ENCODE measurements at regions of chr1 and their contacts with region 1.

Region 1: DNA sequence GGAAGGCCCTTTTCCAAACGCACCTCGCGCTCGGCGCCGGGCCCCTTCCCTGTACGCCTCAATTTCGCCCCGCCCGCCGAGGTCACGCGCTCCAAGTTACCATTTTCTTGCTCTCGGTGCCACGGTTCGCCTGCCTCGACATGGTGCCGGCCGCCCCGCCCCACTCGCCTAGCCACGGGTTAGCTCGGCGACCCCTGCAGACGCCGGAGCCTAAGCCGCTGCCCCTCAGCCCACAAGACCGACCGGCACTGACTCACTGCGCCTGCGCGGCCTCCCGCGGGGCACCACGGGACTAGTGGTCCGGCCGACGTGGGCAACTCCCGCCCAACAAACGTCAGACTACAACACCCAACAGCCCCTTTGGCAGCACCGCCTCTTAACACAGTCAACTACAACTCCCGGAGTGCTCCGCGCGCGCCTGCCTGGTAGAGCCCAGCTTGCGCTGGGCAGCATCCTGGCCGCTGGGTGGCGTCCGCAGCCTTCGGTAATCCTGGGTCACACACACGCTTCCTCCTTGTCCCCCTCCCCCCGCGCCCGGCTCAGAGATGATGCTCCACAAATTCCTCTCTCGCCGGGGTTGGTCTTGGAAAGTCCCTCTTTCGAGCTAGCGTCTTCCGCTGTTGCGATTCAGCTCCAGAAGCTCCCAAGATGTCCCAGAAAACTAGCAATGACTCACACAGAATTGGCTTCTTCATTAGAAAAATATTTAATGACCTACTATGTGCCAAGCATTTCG is at the start of gene TRAPPC3:
- DNase-seq: peak; percentile 100
- ATAC-seq: peak; percentile 78 to 87
- H3K4me3 ChIP-seq: peak within 1 kb of the TSS; percentile 70 to 89 (median 80)
- H3K27ac ChIP-seq: peak within 1 kb of the TSS; percentile 90 to 100 (median 98)
- H3K4me1 ChIP-seq: peaks cover 37 to 54% of the 10 kb centered on the region in 2 donors
- H3K27me3 ChIP-seq: no peaks in the 10 kb centered on the region
- CTCF ChIP-seq: peak; percentile 96 to 98 (median 97)
- POLR2A ChIP-seq: peak; percentile 97 to 98
- total RNA-seq, gene TRAPPC3: 57.5 to 72.4 (median 63.5) TPM

Region 2: GRCh38 chr1:36099681-36100341 is 49.6 kb before region 1 on chr1:
- in situ Hi-C with region 1: loop called in 1 of 4 experiments (anchors 10 kb)
- intact Hi-C with region 1: no loop called
- DNase-seq: peak; percentile 25 to 64
- ATAC-seq: peak; percentile 83 to 93
- H3K4me3 ChIP-seq: no peak overlapping the region
- H3K27ac ChIP-seq: no peak overlapping the region
- H3K4me1 ChIP-seq: no peaks in the 10 kb centered on the region
- H3K27me3 ChIP-seq: no peaks in the 10 kb centered on the region
- CTCF ChIP-seq: peak; percentile 64 to 90 (median 86)
- POLR2A ChIP-seq: no peak

Region 3: GRCh38 chr1:36175137-36176095 is 26.0 kb after region 1 on chr1:
- in situ Hi-C with region 1: no loop called
- intact Hi-C with region 1: loop called (anchors 1 kb)
- DNase-seq: peak; percentile 87 to 94
- ATAC-seq: peak; percentile 93
- H3K4me3 ChIP-seq: peak overlapping the region in 2 of 4 donors; percentile 16 to 22
- H3K27ac ChIP-seq: peak overlapping the region; percentile 97 to 100 (median 99)
- H3K4me1 ChIP-seq: peaks cover 61 to 69% of the 10 kb centered on the region in 2 donors
- H3K27me3 ChIP-seq: no peaks in the 10 kb centered on the region
- CTCF ChIP-seq: no peak
- POLR2A ChIP-seq: peak; percentile 80 to 85

Region 4: DNA sequence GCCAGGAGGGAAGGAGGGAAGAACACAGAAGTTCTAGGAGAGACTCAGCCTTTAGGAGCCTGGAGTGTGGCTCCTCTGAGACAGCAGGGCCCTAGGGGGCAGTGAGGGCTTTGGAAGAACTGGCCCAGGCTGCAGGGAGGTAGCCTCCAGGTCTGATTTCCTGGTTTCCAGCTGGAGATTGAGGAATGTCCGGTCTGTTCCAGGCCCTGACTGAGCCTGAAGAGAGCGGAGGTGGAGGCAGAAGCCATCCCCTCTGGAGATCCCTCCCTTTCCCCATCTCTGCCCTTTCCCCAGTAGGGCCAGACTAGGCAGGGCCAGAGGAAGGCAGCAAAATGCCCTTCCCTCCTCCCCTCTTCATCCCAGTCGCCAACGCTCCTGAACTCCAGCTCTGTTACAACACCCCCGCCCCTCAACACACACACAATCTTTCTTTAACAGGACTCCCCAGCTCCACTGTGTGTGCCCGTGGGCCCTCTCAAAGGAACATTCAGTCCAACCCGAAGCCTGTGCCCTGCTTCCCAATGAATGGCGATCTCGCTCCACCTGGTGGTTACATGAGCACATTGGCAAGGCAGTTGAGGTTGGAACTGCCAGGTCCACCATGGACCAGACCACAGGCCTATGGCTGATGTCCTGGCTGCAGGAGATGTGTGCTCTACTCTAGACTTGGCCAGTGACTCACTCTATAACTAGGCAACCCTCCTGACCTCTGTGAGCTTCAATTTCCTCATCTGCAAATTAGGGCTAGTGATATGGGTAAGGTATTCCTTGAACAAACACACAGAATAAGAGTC is 38.6 kb after region 1 on chr1:
- in situ Hi-C with region 1: loop called in 1 of 4 experiments (anchors 5 kb)
- intact Hi-C with region 1: loop called (anchors 1 kb)
- DNase-seq: peak; percentile 90 to 94
- ATAC-seq: peak; percentile 93 to 95
- H3K4me3 ChIP-seq: no peak overlapping the region
- H3K27ac ChIP-seq: peak overlapping the region; percentile 86 to 92 (median 87)
- H3K4me1 ChIP-seq: peaks cover 16 to 17% of the 10 kb centered on the region in 2 donors
- H3K27me3 ChIP-seq: no peaks in the 10 kb centered on the region
- CTCF ChIP-seq: peak; percentile 88 to 95 (median 92)
- POLR2A ChIP-seq: no peak

Region 5: DNA sequence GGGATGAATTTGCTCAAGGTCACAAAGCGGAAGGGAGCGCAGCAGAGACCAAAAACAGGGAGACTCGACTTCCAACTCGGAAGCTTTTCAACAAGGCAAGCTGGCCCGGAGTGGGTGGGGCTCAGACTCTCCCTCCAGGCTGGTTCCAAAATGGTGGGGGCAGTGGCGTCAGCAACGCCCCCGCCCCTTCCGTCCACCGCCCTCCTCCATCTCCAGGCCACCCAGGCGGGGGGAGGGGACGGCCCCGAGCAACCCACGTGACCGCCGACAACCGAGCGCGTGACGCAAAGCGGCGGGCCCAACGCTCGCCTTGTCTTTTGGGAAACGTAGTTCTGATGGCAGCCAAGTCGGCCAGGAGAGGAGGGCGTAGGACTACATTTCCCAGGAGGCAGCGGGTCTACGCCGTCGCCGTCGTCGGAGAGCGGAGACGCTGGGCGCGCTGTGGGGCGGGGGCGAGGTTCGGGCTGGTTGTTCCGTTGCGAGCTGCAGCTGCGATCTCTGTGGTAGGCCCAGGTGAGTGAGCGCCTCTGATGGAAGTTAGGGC is 74.7 kb after region 1 on chr1 and contains the start of gene THRAP3:
- in situ Hi-C with region 1: no loop called
- intact Hi-C with region 1: loop called (anchors 1 kb)
- DNase-seq: peak; percentile 99 to 100
- ATAC-seq: peak; percentile 85 to 86
- H3K4me3 ChIP-seq: peak within 1 kb of the TSS; percentile 69 to 97 (median 90)
- H3K27ac ChIP-seq: peak within 1 kb of the TSS; percentile 94 to 99 (median 98)
- H3K4me1 ChIP-seq: peaks cover 38 to 51% of the 10 kb centered on the region in 2 donors
- H3K27me3 ChIP-seq: no peaks in the 10 kb centered on the region
- CTCF ChIP-seq: no peak
- POLR2A ChIP-seq: peak; percentile 99 to 100
- total RNA-seq, gene THRAP3: 88.2 to 174 (median 146) TPM

Region 6: DNA sequence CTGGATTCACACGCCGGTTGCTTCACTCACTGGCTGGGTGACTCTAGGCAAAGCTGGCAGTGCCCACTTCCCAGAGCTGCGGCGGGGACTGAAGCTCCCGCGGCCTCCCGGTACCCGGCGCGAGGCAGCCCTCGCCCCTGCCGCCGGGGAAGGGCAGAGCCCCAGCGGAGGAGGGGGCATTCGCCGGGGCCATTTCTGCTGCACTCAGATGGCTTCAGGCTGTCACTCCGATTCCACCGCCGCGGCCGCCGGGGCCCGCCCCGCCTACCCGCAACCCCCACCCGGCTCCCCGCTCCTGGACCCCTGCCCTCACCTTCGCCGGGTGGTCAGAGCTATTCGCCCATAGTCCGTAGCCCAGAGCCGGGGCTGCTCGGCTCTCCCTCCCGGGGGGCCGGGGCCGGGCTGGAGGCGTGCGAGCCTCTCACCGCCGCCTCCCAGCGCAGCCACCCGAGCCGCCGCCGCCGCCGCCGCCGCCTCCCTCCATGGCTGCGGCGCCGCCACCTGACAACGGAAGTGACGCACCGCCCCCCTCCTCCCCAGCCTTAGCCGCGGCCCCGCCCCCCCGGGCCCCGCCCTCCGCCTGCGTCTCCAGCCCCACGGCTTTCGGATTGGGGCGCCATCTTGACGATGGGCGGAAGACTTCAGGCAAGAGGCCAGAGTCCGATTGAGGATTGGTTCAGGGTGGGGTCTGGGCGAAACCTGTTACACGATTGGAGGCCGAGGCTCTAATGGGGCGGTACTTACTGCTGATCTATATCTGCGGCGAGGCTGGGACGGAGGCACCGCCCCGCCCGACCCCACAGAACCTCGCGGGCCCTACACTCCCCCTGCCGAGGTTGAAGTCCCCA is 236.2 kb after region 1 on chr1 and contains the start of gene STK40:
- in situ Hi-C with region 1: no loop called
- intact Hi-C with region 1: loop called (anchors 1 kb)
- DNase-seq: peak; percentile 99
- ATAC-seq: peak; percentile 72 to 74
- H3K4me3 ChIP-seq: peak within 1 kb of the TSS; percentile 90 to 99 (median 94)
- H3K27ac ChIP-seq: peak within 1 kb of the TSS; percentile 95 to 100 (median 97)
- H3K4me1 ChIP-seq: peaks cover 79 to 81% of the 10 kb centered on the region in 2 donors
- H3K27me3 ChIP-seq: no peaks in the 10 kb centered on the region
- CTCF ChIP-seq: no peak
- POLR2A ChIP-seq: peak; percentile 96 to 97
- total RNA-seq, gene STK40: 109 to 263 (median 211) TPM

Region 7: GRCh38 chr1:37410815-37411214 is 1261.4 kb after region 1 on chr1:
- in situ Hi-C with region 1: no loop called
- intact Hi-C with region 1: no loop called
- DNase-seq: no peak
- ATAC-seq: no peak
- H3K4me3 ChIP-seq: no peak overlapping the region
- H3K27ac ChIP-seq: no peak overlapping the region
- H3K4me1 ChIP-seq: no peaks in the 10 kb centered on the region
- H3K27me3 ChIP-seq: peaks cover 0 to 8% (median 3%) of the 10 kb centered on the region in 3 donors
- CTCF ChIP-seq: no peak
- POLR2A ChIP-seq: no peak

Region 8: GRCh38 chr1:37859507-37860345 is 1710.3 kb after region 1 on chr1 and contains the start of gene MTF1:
- in situ Hi-C with region 1: no loop called
- intact Hi-C with region 1: loop called (anchors 2 kb)
- DNase-seq: peak; percentile 98
- ATAC-seq: peak; percentile 94 to 96
- H3K4me3 ChIP-seq: peak within 1 kb of the TSS; percentile 80 to 96 (median 90)
- H3K27ac ChIP-seq: peak within 1 kb of the TSS; percentile 92 to 99 (median 96)
- H3K4me1 ChIP-seq: peaks cover 30 to 34% of the 10 kb centered on the region in 2 donors
- H3K27me3 ChIP-seq: no peaks in the 10 kb centered on the region
- CTCF ChIP-seq: peak; percentile 88 to 95 (median 92)
- POLR2A ChIP-seq: peak; percentile 85 to 94
- total RNA-seq, gene MTF1: 4.0 to 9.4 (median 6.4) TPM